ENCODE measurements at regions of chr11 and their contacts with region 1.

Region 1: DNA sequence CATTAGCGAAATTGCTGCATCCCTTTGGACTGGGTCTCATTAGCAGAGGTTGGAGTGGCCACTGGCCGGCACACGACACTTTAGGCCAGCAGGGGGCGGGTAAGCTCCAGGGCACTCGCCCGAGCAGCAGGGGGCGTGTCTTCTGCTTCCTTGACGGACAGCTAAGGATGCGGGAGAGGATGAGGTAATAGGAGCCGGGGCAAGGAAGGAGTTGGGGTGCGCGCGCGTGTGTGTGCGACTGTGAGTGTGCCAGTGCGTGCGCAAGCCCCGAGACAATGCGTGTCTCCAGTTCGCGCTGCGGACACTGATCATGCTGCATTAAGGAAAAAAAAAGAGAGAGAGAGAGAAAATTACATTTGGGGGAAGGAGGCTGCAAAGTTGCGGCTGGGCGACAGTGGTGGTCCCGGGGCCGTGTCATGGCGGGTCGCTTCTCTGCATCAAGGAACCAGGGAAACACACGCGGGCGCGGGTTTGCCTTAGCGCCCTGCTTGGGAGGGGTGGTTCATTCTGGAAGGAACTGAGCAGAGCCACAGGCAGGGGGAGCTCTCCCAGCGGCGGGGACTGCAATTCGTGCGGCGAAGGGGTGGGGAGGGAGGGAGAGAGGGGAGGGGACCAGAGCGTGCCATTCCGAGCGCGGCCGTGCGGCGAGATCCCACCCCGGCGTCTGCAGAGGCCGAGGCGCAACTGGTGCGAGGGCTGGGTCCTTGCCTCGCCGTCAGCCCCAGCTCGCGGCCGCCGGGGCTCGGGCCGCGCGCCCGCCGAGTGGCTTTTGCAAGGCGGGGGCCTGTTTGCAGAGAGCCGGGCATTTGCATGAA is at the start of gene DTX4:
- DNase-seq: peak; percentile 92 to 96 (median 95)
- H3K4me3 ChIP-seq: peak within 1 kb of the TSS; percentile 68
- H3K27ac ChIP-seq: peak within 1 kb of the TSS; percentile 73 to 80
- H3K4me1 ChIP-seq: peaks cover 22% of the 10 kb centered on the region
- H3K27me3 ChIP-seq: no peaks in the 10 kb centered on the region
- CTCF ChIP-seq: peak; percentile 93 to 95 (median 94)
- EP300 ChIP-seq: no peak
- POLR2A ChIP-seq: peak; percentile 20
- total RNA-seq, gene DTX4: 6.1 to 20.3 (median 16.8) TPM

Region 2: DNA sequence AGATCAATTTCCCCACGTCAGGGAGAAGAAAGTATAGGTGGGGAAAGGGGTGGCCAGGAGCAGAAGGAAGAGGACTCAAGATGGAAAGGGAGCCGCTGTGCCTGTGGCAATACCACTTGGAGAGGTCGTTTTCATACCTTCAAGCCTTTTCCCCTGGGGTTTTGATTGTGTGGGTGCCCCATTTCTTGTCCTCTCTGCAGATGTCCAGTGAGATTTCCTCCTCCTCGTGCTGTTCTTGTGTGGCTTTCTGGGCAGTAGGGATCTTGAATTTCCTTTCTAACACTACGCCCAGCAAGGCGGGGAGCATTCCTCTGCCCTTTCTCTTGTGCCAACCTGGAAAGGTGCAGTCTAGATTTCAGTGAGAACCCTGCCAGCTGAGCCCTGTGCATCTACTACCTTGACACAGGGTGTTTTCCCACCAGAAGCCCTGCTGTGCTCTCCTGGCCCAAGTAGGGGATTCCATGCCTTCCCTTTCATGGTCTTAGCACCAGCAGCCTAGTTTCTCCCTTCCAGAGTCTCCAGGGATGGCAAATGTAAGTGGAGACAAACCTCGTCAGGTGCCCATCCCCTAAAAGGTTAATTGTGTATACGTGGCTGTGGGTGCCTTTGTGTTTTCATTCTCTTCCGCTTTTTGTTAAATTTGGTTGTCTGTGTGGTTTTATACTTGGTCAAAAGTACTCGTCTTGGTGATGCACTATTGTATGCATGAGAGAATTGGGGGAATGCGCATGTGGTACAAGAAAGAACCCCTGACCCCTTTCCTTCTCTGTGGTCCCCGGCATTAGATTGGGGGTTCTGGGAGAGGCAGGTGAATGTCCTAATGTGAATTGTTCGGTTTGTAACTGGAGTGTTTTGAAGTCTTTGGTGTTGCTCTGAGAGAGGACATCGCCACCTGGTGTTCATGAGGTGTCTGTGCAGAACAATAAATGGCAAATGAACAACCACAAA is 112.4 kb after region 1 on chr11:
- intact Hi-C with region 1: loop called (anchors 2 to 10 kb)
- DNase-seq: peak in 2 of 5 donors; percentile 33 to 57
- H3K4me3 ChIP-seq: no peak overlapping the region
- H3K27ac ChIP-seq: no peak overlapping the region
- H3K4me1 ChIP-seq: no peaks in the 10 kb centered on the region
- H3K27me3 ChIP-seq: no peaks in the 10 kb centered on the region
- CTCF ChIP-seq: peak; percentile 59 to 75 (median 70)
- EP300 ChIP-seq: no peak
- POLR2A ChIP-seq: no peak

Region 3: DNA sequence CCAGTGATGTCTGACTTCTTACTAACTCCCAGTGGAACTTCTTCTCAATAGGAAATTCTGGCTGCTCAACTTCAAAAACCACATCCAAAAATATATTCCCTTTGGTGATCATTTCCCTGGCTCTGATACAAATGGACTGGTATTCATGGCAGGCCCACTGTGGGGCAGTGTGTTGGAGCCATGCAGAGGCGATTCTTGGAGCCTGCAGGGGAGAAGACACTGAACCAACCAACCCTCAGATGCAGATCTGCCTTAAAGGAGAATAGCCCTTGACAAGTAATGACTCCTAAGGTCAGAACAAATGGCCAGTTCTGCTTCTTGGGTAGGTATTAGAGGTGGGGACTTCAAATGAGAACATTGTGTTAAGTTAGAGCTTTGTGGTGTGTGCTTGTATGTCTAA is 351.8 kb after region 1 on chr11:
- intact Hi-C with region 1: no loop called
- DNase-seq: no peak
- H3K4me3 ChIP-seq: no peak overlapping the region
- H3K27ac ChIP-seq: no peak overlapping the region
- H3K4me1 ChIP-seq: no peaks in the 10 kb centered on the region
- H3K27me3 ChIP-seq: no peaks in the 10 kb centered on the region
- CTCF ChIP-seq: no peak
- EP300 ChIP-seq: no peak
- POLR2A ChIP-seq: no peak

Region 4: GRCh38 chr11:60005360-60005759 is 833.6 kb after region 1 on chr11:
- intact Hi-C with region 1: no loop called
- DNase-seq: no peak
- H3K4me3 ChIP-seq: no peak overlapping the region
- H3K27ac ChIP-seq: no peak overlapping the region
- H3K4me1 ChIP-seq: no peaks in the 10 kb centered on the region
- H3K27me3 ChIP-seq: no peaks in the 10 kb centered on the region
- CTCF ChIP-seq: no peak
- EP300 ChIP-seq: no peak
- POLR2A ChIP-seq: no peak

Measured in ovary (tissue), 10 donors.